Caco-2 (cell line): ENCODE measurements at regions of chr11 and their contacts with region 1.

Region 1: GRCh38 chr11:63871962-63872799 is 33.3 kb downstream of the MARK2 start:
- DNase-seq: peak; percentile 88 to 91
- H3K4me3 ChIP-seq: no peak overlapping the region
- H3K4me3 Mint-ChIP-seq: peak overlapping the region; percentile 31
- H3K27ac Mint-ChIP-seq: no peak overlapping the region
- H3K4me1 ChIP-seq: peaks cover 8% of the 10 kb centered on the region
- H3K4me1 Mint-ChIP-seq: peaks cover 25% of the 10 kb centered on the region
- H3K27me3 ChIP-seq: no peaks in the 10 kb centered on the region
- H3K27me3 Mint-ChIP-seq: no peaks in the 10 kb centered on the region
- CTCF ChIP-seq: peak; percentile 38 to 69

Region 2: DNA sequence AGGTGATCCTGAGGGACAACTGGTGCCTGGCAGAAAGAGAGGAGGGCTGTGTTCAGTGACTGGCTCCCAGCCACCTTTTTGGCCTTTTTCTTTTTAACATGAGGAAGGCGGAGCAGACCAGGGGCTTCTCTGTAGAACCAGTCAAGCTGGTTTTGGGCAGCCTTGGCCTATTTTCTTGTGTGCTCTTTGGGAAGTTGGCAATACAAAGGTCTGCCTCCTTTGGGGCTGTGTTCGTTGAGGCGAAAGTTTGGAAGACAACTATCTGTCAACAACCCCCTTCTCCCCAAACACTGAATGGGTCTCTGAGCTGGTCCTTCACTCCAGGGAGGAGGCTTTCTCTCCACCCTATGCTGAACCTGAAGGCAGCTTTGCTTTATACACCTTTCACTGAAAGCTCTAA is 24.8 kb before region 1 on chr11:
- CTCF ChIA-PET with region 1: interaction called, 7 read pairs
- POLR2A ChIA-PET with region 1: no interaction called
- intact Hi-C with region 1: loop called (anchors 1 kb)
- DNase-seq: peak; percentile 74 to 76
- H3K4me3 ChIP-seq: no peak overlapping the region
- H3K4me3 Mint-ChIP-seq: peak overlapping the region; percentile 57
- H3K27ac Mint-ChIP-seq: peak overlapping the region; percentile 76
- H3K4me1 ChIP-seq: peaks cover 79% of the 10 kb centered on the region
- H3K4me1 Mint-ChIP-seq: peaks cover 51% of the 10 kb centered on the region
- H3K27me3 ChIP-seq: no peaks in the 10 kb centered on the region
- H3K27me3 Mint-ChIP-seq: no peaks in the 10 kb centered on the region
- CTCF ChIP-seq: no peak

Region 3: GRCh38 chr11:63855975-63856749 is 16.0 kb before region 1 on chr11:
- CTCF ChIA-PET with region 1: interaction called, 9 read pairs
- POLR2A ChIA-PET with region 1: no interaction called
- intact Hi-C with region 1: loop called (anchors 1 kb)
- DNase-seq: peak; percentile 79 to 83
- H3K4me3 ChIP-seq: no peak overlapping the region
- H3K4me3 Mint-ChIP-seq: peak overlapping the region; percentile 16
- H3K27ac Mint-ChIP-seq: peak overlapping the region; percentile 80
- H3K4me1 ChIP-seq: peaks cover 48% of the 10 kb centered on the region
- H3K4me1 Mint-ChIP-seq: peaks cover 20% of the 10 kb centered on the region
- H3K27me3 ChIP-seq: no peaks in the 10 kb centered on the region
- H3K27me3 Mint-ChIP-seq: no peaks in the 10 kb centered on the region
- CTCF ChIP-seq: no peak

Region 4: GRCh38 chr11:63888170-63889086 is 16.2 kb after region 1 on chr11:
- CTCF ChIA-PET with region 1: interaction called, 13 read pairs
- POLR2A ChIA-PET with region 1: no interaction called
- intact Hi-C with region 1: loop called (anchors 1 kb)
- DNase-seq: peak; percentile 87 to 92
- H3K4me3 ChIP-seq: peak overlapping the region; percentile 56
- H3K4me3 Mint-ChIP-seq: peak overlapping the region; percentile 95
- H3K27ac Mint-ChIP-seq: peak overlapping the region; percentile 98
- H3K4me1 ChIP-seq: peaks cover 33% of the 10 kb centered on the region
- H3K4me1 Mint-ChIP-seq: peaks cover 34% of the 10 kb centered on the region
- H3K27me3 ChIP-seq: no peaks in the 10 kb centered on the region
- H3K27me3 Mint-ChIP-seq: no peaks in the 10 kb centered on the region
- CTCF ChIP-seq: no peak

Region 5: GRCh38 chr11:63945477-63946163 is 73.4 kb after region 1 on chr11:
- CTCF ChIA-PET with region 1: interaction called, 10 read pairs
- POLR2A ChIA-PET with region 1: no interaction called
- intact Hi-C with region 1: no loop called
- DNase-seq: peak; percentile 66 to 78
- H3K4me3 ChIP-seq: no peak overlapping the region
- H3K4me3 Mint-ChIP-seq: no peak overlapping the region
- H3K27ac Mint-ChIP-seq: no peak overlapping the region
- H3K4me1 ChIP-seq: peaks cover 4% of the 10 kb centered on the region; the same call in 1 of the 2 replicates
- H3K4me1 Mint-ChIP-seq: peaks cover 2% of the 10 kb centered on the region
- H3K27me3 ChIP-seq: no peaks in the 10 kb centered on the region
- H3K27me3 Mint-ChIP-seq: no peaks in the 10 kb centered on the region
- CTCF ChIP-seq: peak; percentile 67 to 70